ENCODE measurements at regions of chr14 and their contacts with region 1.

Region 1: DNA sequence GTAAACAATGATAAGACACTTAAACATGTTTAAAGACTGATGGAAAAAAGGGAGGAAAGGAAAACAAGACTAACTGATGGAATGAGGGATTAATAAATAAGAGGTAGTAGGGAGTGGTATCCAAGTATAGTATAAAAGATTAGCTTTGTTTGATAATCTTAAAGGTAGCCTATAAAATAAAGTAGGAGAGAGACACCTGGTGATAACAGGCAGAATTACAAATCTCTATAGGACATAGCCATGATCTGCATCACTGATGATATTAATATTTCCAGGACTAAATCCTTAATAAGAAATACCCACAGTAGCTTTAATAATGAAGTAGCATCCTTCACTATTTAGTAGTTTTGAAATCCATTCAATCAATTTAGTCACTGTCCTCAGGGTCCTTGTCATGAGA is 30.4 kb downstream of the DLGAP5 start:
- DNase-seq: no peak
- ATAC-seq: peak; percentile 74

Region 2: DNA sequence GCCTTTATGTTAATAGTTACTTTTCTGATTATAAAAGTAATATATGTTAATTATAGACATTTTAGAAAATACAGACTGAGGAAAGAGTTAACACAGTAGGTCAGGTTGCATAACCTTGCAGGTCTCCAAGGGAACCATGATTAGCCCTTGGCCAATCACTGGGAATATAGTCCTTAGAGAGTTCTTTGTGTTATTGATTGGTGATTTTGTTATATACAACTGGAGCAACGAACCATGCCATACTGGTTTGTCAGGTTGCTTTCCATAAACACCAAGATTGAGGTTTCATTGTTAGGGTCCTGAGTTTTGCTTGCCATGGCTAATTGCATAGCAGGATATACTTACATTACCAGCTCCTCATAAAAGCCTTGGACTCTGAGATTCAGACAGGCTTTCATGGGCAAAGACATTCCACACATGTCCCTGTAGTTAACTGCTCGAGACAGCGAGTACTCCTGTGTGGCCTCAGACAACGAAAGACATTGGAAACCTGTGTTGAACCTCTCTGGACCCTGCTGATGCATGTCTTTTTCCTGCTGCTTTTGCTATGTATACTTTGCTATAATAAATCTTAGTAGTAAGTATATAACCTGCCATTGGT is 75.8 kb before region 1 on chr14:
- intact Hi-C with region 1: loop called (anchors 10 kb)
- DNase-seq: no peak
- ATAC-seq: no peak

Region 3: DNA sequence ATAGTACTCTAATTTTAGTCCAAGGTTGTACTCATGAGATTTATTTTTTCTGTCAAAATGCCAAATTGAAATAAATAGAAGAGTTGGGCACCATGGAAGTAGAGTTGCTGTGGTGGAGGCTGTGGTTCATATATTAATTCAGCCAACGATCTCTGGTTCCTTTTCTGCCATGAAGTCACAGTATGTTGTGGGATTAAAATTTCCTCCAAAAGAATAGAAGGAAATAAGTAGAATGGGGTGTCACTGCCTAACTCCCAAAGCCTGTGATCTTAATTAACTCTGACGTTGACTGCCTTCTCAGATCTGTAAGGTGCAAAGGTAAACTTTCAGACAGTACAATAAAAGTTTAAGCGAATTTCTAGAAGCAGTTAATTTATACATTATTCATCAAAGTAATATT is 72.6 kb after region 1 on chr14:
- intact Hi-C with region 1: no loop called
- DNase-seq: no peak
- ATAC-seq: no peak

Measured in sciatic nerve (tissue), 2 donors.